HCT116 (cell line): ENCODE measurements at regions of chr4 and their contacts with region 1.

Region 1: GRCh38 chr4:145061318-145061920 is 36.6 kb downstream of the ANAPC10 start:
- DNase-seq: peak; percentile 49
- ATAC-seq: peak; percentile 68; the same call in 1 of the 2 replicates
- H3K4me3 ChIP-seq: no peak overlapping the region
- H3K27ac ChIP-seq: no peak overlapping the region
- H3K4me1 ChIP-seq: peaks cover 6 to 15% of the 10 kb centered on the region in 2 experiments; a peak in 3 of 4 replicates
- H3K27me3 ChIP-seq: no peaks in the 10 kb centered on the region
- CTCF ChIP-seq: peak; percentile 22 to 60 (median 25); a peak in 4 of 6 replicates
- POLR2A ChIP-seq: no peak
- RAD21 ChIP-seq: peak; percentile 69

Region 2: DNA sequence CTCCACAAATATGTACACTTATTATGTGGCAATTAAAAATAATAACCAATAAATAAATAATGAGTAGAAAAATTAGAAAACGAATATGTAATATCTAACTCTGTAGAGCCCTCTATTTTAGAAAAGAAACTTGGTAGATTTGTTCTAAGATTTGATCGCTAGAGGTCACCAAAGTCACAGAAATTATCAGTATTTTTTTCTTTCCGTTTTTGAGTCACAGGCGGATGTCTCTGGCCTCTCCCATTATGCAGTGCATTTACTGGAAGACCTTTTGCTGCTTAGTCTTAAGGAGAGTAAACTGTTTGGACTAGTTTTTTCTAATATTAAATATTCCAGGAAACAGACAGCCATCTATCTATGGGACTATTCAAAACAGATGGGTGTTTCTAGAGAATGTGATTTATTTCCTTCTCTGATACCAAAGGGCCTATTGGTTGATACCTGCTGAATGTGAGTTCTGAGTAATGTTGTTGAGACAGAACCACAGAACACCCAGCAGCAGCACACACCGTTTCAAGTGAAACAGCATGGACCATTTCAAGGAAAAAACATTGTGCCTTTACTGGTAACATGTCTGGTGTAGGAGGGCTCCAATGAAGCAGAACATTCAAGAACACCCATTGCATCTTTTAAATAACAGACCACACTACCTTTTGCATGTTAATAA is 886.9 kb before region 1 on chr4:
- CTCF ChIA-PET with region 1: interaction called, 3 read pairs
- POLR2A ChIA-PET with region 1: no interaction called
- RAD21 ChIA-PET with region 1: interaction called in 1 of 2 experiments, 3 read pairs
- intact Hi-C with region 1: loop called (anchors 1 kb)
- DNase-seq: peak; percentile 44
- ATAC-seq: peak; percentile 87
- H3K4me3 ChIP-seq: no peak overlapping the region
- H3K27ac ChIP-seq: no peak overlapping the region
- H3K4me1 ChIP-seq: no peaks in the 10 kb centered on the region
- H3K27me3 ChIP-seq: no peaks in the 10 kb centered on the region
- CTCF ChIP-seq: peak; percentile 9 to 60 (median 54); a peak in 4 of 6 replicates
- POLR2A ChIP-seq: no peak
- RAD21 ChIP-seq: peak; percentile 81

Region 3: DNA sequence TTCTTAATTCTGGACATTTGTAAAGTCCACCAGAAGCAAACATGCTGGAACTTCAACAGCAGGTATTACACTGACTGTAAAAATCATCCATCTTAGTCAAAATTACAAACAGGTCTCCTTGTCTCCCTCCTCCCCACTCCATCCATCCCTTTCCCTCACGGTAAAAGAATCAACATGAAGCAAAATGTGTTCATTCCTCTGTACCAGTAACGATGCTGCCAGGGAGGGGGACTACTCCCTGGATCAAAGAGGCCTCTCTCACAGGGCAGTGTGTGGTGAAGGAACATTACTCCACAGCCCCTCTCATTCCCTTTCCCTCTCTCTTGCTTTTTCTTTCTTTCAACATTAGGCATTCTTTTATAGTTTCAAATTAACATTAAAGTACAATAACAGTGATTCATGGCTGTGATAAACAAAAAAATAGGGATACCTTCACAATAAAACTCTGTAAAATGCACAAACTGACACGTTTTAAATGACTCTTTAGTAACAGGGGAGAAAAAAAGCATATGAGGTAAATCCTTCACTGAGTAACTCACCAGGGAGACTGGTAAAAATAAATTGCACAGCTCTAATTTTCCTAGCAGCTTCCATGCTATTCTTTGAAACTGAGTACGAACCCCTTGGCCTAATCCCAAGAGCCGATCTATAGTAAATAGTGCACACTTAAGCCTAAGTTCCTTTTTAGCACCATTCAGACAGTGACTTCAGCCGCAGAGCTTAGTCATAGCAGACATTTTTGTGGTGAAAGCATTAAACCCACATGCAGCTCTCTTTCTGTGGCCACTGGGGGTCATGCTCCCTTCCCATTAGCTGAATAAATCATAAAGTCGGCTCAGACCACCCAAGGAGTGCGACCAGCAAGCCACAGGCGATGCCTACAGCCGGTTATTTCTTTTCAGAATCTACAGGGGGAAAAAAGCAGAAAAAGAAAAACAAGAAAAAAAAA is 705.3 kb before region 1 on chr4:
- CTCF ChIA-PET with region 1: interaction called, 4 read pairs
- POLR2A ChIA-PET with region 1: no interaction called
- RAD21 ChIA-PET with region 1: no interaction called
- intact Hi-C with region 1: loop called (anchors 2 kb)
- DNase-seq: peak; percentile 67
- ATAC-seq: peak; percentile 95
- H3K4me3 ChIP-seq: peak overlapping the region in 1 of 2 experiments; percentile 5; a peak in 1 of 4 replicates
- H3K27ac ChIP-seq: no peak overlapping the region
- H3K4me1 ChIP-seq: peaks cover 12 to 13% of the 10 kb centered on the region in 2 experiments; a peak in 3 of 4 replicates
- H3K27me3 ChIP-seq: peaks cover 55% of the 10 kb centered on the region
- CTCF ChIP-seq: peak in 2 of 3 experiments; percentile 39 to 50; a peak in 3 of 6 replicates
- POLR2A ChIP-seq: no peak
- RAD21 ChIP-seq: peak; percentile 37

Region 4: DNA sequence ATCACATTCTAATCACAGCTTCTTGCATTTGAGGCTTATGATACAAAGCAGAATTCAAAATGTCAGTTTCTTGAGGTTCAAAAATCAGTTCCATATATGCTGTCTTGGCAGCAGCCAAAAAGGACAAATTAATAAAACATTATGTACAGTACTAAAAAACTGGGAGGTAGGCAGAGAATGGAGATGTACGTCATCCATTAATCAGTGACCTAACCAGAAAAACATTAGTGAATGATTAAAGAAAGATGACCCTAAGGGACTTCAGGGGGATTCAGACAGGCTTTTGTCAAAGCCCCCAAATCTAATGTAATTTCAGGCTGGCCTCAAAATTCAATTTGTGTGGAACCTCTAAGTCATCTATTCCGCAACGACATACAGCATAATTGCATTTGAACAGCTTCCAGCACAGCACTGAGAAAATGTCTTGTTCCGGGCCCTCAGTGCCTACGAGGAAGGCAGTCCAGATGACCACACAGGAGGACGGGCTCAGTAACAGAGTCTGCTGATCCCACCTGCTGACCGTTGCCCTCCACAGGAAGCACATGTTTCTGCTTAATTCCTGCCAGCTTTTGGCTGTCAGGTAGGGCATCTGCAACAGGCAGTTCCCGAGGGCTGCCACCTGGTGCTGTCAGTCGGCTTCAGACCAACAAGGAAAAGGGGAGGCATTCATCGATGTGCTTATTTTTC is 499.3 kb before region 1 on chr4:
- CTCF ChIA-PET with region 1: no interaction called
- POLR2A ChIA-PET with region 1: no interaction called
- RAD21 ChIA-PET with region 1: no interaction called
- intact Hi-C with region 1: loop called (anchors 10 kb)
- DNase-seq: no peak
- ATAC-seq: peak; percentile 55
- H3K4me3 ChIP-seq: no peak overlapping the region
- H3K27ac ChIP-seq: no peak overlapping the region
- H3K4me1 ChIP-seq: no peaks in the 10 kb centered on the region
- H3K27me3 ChIP-seq: no peaks in the 10 kb centered on the region
- CTCF ChIP-seq: no peak
- POLR2A ChIP-seq: no peak
- RAD21 ChIP-seq: no peak

Region 5: GRCh38 chr4:144611846-144612245 is 449.6 kb before region 1 on chr4:
- CTCF ChIA-PET with region 1: no interaction called
- POLR2A ChIA-PET with region 1: no interaction called
- RAD21 ChIA-PET with region 1: no interaction called
- intact Hi-C with region 1: loop called (anchors 10 kb)
- DNase-seq: peak; percentile 26
- ATAC-seq: peak; percentile 83
- H3K4me3 ChIP-seq: no peak overlapping the region
- H3K27ac ChIP-seq: no peak overlapping the region
- H3K4me1 ChIP-seq: no peaks in the 10 kb centered on the region
- H3K27me3 ChIP-seq: no peaks in the 10 kb centered on the region
- CTCF ChIP-seq: peak; percentile 35 to 73 (median 63); a peak in 5 of 6 replicates
- POLR2A ChIP-seq: no peak
- RAD21 ChIP-seq: peak; percentile 54

Region 6: GRCh38 chr4:144787365-144788258 is 273.8 kb before region 1 on chr4:
- CTCF ChIA-PET with region 1: no interaction called
- POLR2A ChIA-PET with region 1: no interaction called
- RAD21 ChIA-PET with region 1: no interaction called
- intact Hi-C with region 1: loop called (anchors 5 kb)
- DNase-seq: peak; percentile 31
- ATAC-seq: peak; percentile 63
- H3K4me3 ChIP-seq: no peak overlapping the region
- H3K27ac ChIP-seq: no peak overlapping the region
- H3K4me1 ChIP-seq: peaks cover 0 to 5% of the 10 kb centered on the region in 2 experiments; a peak in 1 of 4 replicates
- H3K27me3 ChIP-seq: no peaks in the 10 kb centered on the region
- CTCF ChIP-seq: peak; percentile 16 to 67 (median 50); a peak in 5 of 6 replicates
- POLR2A ChIP-seq: no peak
- RAD21 ChIP-seq: peak; percentile 57